GM12878 (cell line): ENCODE measurements at regions of chr7 and their contacts with region 1.

Region 1: GRCh38 chr7:47088329-47089067 is 493.4 kb downstream of the TNS3 start:
- DNase-seq: no peak
- ATAC-seq: peak; percentile 89
- H3K4me3 ChIP-seq: no peak overlapping the region
- H3K27ac ChIP-seq: no peak overlapping the region
- H3K4me1 ChIP-seq: no peaks in the 10 kb centered on the region
- H3K27me3 ChIP-seq: no peaks in the 10 kb centered on the region
- CTCF ChIP-seq: peak; percentile 74 to 86 (median 76)
- EP300 ChIP-seq: no peak
- POLR2A ChIP-seq: no peak
- RAD21 ChIP-seq: peak; percentile 90

Region 2: GRCh38 chr7:45917658-45918057 is 1170.8 kb before region 1 on chr7:
- CTCF ChIA-PET with region 1: interaction called, 91 read pairs
- POLR2A ChIA-PET with region 1: no interaction called
- RAD21 ChIA-PET with region 1: interaction called, 41 read pairs
- SMC1A ChIA-PET with region 1: interaction called, 30 read pairs
- in situ Hi-C with region 1: loop called (anchors 5 kb)
- intact Hi-C with region 1: loop called (anchors 1 kb)
- DNase-seq: no peak
- ATAC-seq: peak; percentile 81
- H3K4me3 ChIP-seq: no peak overlapping the region
- H3K27ac ChIP-seq: no peak overlapping the region
- H3K4me1 ChIP-seq: no peaks in the 10 kb centered on the region
- H3K27me3 ChIP-seq: peaks cover 2 to 3% of the 10 kb centered on the region in 2 experiments; a peak in 3 of 4 replicates
- CTCF ChIP-seq: peak; percentile 87 to 93 (median 89); a peak in 5 of 6 replicates
- EP300 ChIP-seq: no peak
- POLR2A ChIP-seq: no peak
- RAD21 ChIP-seq: peak; percentile 84

Region 3: GRCh38 chr7:46291064-46291463 is 797.4 kb before region 1 on chr7:
- CTCF ChIA-PET with region 1: no interaction called
- POLR2A ChIA-PET with region 1: no interaction called
- RAD21 ChIA-PET with region 1: no interaction called
- SMC1A ChIA-PET with region 1: no interaction called
- in situ Hi-C with region 1: no loop called
- intact Hi-C with region 1: no loop called
- DNase-seq: peak; percentile 47
- ATAC-seq: peak; percentile 94
- H3K4me3 ChIP-seq: no peak overlapping the region
- H3K27ac ChIP-seq: peak overlapping the region; percentile 19; the same call in 1 of the 2 replicates
- H3K4me1 ChIP-seq: no peaks in the 10 kb centered on the region
- H3K27me3 ChIP-seq: no peaks in the 10 kb centered on the region
- CTCF ChIP-seq: no peak
- EP300 ChIP-seq: no peak
- POLR2A ChIP-seq: no peak
- RAD21 ChIP-seq: no peak

Region 4: GRCh38 chr7:46360811-46361210 is 727.7 kb before region 1 on chr7:
- CTCF ChIA-PET with region 1: interaction called, 7 read pairs
- POLR2A ChIA-PET with region 1: no interaction called
- RAD21 ChIA-PET with region 1: interaction called, 16 read pairs
- SMC1A ChIA-PET with region 1: interaction called, 5 read pairs
- in situ Hi-C with region 1: loop called (anchors 25 kb)
- intact Hi-C with region 1: loop called (anchors 2 kb)
- DNase-seq: no peak
- ATAC-seq: no peak; the same call in 2 of the 3 replicates
- H3K4me3 ChIP-seq: no peak overlapping the region
- H3K27ac ChIP-seq: no peak overlapping the region
- H3K4me1 ChIP-seq: no peaks in the 10 kb centered on the region
- H3K27me3 ChIP-seq: no peaks in the 10 kb centered on the region
- CTCF ChIP-seq: peak in 1 of 3 experiments; percentile 14; a peak in 1 of 6 replicates
- EP300 ChIP-seq: no peak
- POLR2A ChIP-seq: no peak
- RAD21 ChIP-seq: peak; percentile 24; the same call in 1 of the 2 replicates

Region 5: DNA sequence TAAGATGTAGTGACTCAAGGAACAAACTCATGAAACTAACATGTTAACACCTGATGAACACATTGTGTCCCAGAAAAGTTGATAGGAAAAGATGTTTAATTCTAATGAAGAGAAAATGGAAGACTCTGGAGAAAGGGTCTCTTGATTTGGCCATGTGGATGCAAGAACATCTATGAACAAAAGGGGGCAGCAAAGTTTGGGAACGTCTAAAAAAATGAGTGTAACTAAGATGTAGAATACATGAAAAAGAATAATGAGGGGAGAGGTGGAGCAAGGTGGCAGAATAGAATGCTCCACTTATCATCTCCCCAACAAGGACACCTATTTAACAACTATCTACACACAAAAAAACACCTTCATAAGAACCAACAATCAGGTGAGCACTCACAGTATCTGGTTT is 311.7 kb before region 1 on chr7:
- CTCF ChIA-PET with region 1: interaction called, 4 read pairs
- POLR2A ChIA-PET with region 1: no interaction called
- RAD21 ChIA-PET with region 1: interaction called, 4 read pairs
- SMC1A ChIA-PET with region 1: interaction called, 4 read pairs
- in situ Hi-C with region 1: no loop called
- intact Hi-C with region 1: loop called (anchors 2 kb)
- DNase-seq: no peak
- ATAC-seq: no peak
- H3K4me3 ChIP-seq: no peak overlapping the region
- H3K27ac ChIP-seq: no peak overlapping the region
- H3K4me1 ChIP-seq: no peaks in the 10 kb centered on the region
- H3K27me3 ChIP-seq: no peaks in the 10 kb centered on the region
- CTCF ChIP-seq: peak in 1 of 3 experiments; percentile 6; a peak in 2 of 6 replicates
- EP300 ChIP-seq: no peak
- POLR2A ChIP-seq: no peak
- RAD21 ChIP-seq: no peak

Region 6: GRCh38 chr7:47179812-47180515 is 91.5 kb after region 1 on chr7:
- CTCF ChIA-PET with region 1: interaction called, 7 read pairs
- POLR2A ChIA-PET with region 1: no interaction called
- RAD21 ChIA-PET with region 1: interaction called, 3 read pairs
- SMC1A ChIA-PET with region 1: no interaction called
- in situ Hi-C with region 1: no loop called
- intact Hi-C with region 1: loop called (anchors 5 kb)
- DNase-seq: no peak
- ATAC-seq: peak; percentile 87
- H3K4me3 ChIP-seq: no peak overlapping the region
- H3K27ac ChIP-seq: no peak overlapping the region
- H3K4me1 ChIP-seq: no peaks in the 10 kb centered on the region
- H3K27me3 ChIP-seq: no peaks in the 10 kb centered on the region
- CTCF ChIP-seq: peak; percentile 55 to 80 (median 58)
- EP300 ChIP-seq: no peak
- POLR2A ChIP-seq: no peak
- RAD21 ChIP-seq: peak; percentile 71